Ovary (tissue), 10 donors: ENCODE measurements at regions of chr14 and their contacts with region 1.

Region 1: DNA sequence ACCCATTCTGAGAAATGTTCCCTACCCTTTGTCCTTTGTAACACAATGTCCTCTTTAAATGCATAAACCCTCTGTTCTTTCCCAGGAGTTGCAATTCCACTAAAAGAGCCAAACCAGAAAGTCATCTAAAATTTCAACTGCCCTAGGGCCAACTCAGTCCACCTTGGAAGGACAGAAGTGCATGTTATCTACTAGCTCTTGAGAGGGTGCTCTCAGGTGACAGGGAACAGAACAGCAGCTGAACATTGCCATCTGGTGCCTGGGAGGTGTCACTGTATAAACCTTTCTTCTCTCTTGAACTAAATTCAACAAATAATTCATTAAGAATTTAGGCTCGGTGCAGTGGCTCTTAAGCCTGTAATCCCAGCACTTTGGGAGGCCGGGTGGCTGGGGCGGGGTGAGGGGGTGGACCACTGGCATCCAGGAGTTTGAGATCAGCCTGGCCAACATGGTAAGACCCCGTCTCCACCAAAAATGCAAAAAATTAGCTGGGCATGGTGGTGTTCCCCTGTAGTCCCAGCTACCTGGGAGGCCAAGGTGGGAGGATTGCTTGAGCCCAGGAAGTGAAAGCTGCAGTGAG is 10.3 kb upstream of the FERMT2 start:
- DNase-seq: peak; percentile 35 to 66 (median 53)
- H3K4me3 ChIP-seq: no peak overlapping the region
- H3K27ac ChIP-seq: no peak overlapping the region
- H3K4me1 ChIP-seq: no peaks in the 10 kb centered on the region
- H3K27me3 ChIP-seq: no peaks in the 10 kb centered on the region
- CTCF ChIP-seq: peak in 2 of 3 donors; percentile 59 to 64
- EP300 ChIP-seq: no peak
- POLR2A ChIP-seq: no peak

Region 2: GRCh38 chr14:52824507-52824906 is 136.6 kb before region 1 on chr14:
- intact Hi-C with region 1: loop called (anchors 2 to 10 kb)
- DNase-seq: no peak
- H3K4me3 ChIP-seq: no peak overlapping the region
- H3K27ac ChIP-seq: no peak overlapping the region
- H3K4me1 ChIP-seq: peaks cover 1% of the 10 kb centered on the region
- H3K27me3 ChIP-seq: no peaks in the 10 kb centered on the region
- CTCF ChIP-seq: no peak
- EP300 ChIP-seq: no peak
- POLR2A ChIP-seq: no peak

Region 3: DNA sequence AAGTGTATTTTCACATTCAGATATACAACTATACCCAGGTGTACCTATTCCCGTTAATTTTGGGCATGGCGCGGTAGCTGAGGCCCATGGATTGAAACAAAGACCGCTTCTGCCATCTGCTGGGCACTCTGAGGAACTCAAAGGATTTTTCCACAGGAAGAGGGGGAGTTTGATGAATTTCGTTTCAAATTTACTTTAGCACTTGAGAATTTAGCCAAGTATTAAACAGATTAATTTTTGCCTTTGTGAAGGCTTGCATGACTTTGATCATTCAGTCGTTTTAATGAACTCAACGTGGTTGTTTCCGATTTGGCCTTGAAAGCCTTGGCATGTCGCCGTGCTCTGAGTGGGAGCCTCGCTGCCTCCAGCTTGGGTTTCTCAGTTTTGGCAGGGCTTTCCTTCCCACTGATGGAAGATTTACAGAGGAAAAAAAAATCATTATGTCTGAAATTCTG is 345.1 kb after region 1 on chr14:
- intact Hi-C with region 1: loop called in 1 of 4 experiments (anchors 10 kb)
- DNase-seq: peak; percentile 68 to 86 (median 82)
- H3K4me3 ChIP-seq: peak overlapping the region; percentile 21
- H3K27ac ChIP-seq: peak overlapping the region in 1 of 2 donors; percentile 36
- H3K4me1 ChIP-seq: peaks cover 15% of the 10 kb centered on the region
- H3K27me3 ChIP-seq: no peaks in the 10 kb centered on the region
- CTCF ChIP-seq: peak; percentile 63 to 80 (median 70)
- EP300 ChIP-seq: no peak
- POLR2A ChIP-seq: no peak